A673 (cell line): ENCODE measurements at regions of chr20 and their contacts with region 1.

Region 1: GRCh38 chr20:49338061-49338460 is 60.2 kb upstream of the ZNFX1 start:
- DNase-seq: no peak
- H3K4me3 ChIP-seq: no peak overlapping the region
- H3K27ac ChIP-seq: no peak overlapping the region
- H3K4me1 ChIP-seq: no peaks in the 10 kb centered on the region
- H3K27me3 ChIP-seq: no peaks in the 10 kb centered on the region
- CTCF ChIP-seq: no peak

Region 2: DNA sequence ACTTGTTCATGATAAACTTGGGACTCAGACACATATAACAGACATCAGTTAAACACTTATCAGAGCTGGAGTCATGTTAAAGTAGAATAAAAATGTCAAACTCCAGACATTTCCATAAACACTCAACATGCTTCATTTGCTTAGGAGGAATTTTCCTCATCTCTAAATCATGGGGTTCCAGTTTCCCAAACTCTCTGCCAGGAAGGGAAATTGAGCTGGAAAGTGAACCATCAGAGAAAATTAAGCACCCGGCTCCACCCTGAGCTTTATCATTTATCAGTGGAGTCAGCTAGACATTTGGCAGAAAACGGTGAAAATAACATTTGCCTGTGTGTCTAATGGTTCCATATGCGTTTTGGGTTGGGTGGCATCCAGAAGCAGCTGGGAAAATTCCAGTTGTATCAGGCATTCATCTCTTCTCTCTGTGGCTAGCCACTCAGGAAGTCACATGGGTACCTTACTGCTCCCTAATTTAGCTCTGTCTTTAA is 35.0 kb before region 1 on chr20:
- CTCF ChIA-PET with region 1: no interaction called
- POLR2A ChIA-PET with region 1: no interaction called
- intact Hi-C with region 1: no loop called
- DNase-seq: no peak
- H3K4me3 ChIP-seq: no peak overlapping the region
- H3K27ac ChIP-seq: no peak overlapping the region
- H3K4me1 ChIP-seq: no peaks in the 10 kb centered on the region
- H3K27me3 ChIP-seq: no peaks in the 10 kb centered on the region
- CTCF ChIP-seq: no peak

Region 3: GRCh38 chr20:49484180-49485140 is 146.4 kb after region 1 on chr20:
- CTCF ChIA-PET with region 1: interaction called, 28 read pairs
- POLR2A ChIA-PET with region 1: no interaction called
- intact Hi-C with region 1: loop called (anchors 1 kb)
- DNase-seq: peak; percentile 86
- H3K4me3 ChIP-seq: peak overlapping the region; percentile 33
- H3K27ac ChIP-seq: no peak overlapping the region
- H3K4me1 ChIP-seq: no peaks in the 10 kb centered on the region
- H3K27me3 ChIP-seq: peaks cover 74% of the 10 kb centered on the region
- CTCF ChIP-seq: peak; percentile 85

Region 4: DNA sequence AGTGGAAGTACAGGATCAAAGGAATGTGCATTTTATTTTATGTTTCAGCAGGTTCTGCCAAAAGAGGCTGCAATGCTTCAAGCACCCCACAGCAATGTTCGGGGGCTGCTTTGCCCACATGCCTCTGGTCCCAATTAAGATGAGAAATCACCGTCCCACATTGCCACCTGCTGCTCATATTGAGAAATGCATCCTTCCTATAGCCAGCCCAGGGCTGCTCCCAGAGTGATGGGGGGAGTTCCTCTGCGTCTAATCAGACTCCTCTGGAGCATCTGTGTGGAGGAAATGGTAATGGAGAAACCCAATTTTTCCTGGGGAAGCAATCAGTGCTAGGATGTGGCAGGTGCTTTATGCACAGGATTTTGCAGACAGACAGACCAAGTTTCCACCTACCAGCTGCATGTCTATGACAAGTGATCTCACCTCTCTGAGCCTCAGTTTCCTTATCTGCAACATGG is 196.2 kb after region 1 on chr20:
- CTCF ChIA-PET with region 1: no interaction called
- POLR2A ChIA-PET with region 1: no interaction called
- intact Hi-C with region 1: loop called (anchors 1 kb)
- DNase-seq: peak; percentile 83
- H3K4me3 ChIP-seq: no peak overlapping the region
- H3K27ac ChIP-seq: no peak overlapping the region
- H3K4me1 ChIP-seq: no peaks in the 10 kb centered on the region
- H3K27me3 ChIP-seq: no peaks in the 10 kb centered on the region
- CTCF ChIP-seq: peak; percentile 80

Region 5: GRCh38 chr20:49865559-49865958 is 527.5 kb after region 1 on chr20:
- CTCF ChIA-PET with region 1: no interaction called
- POLR2A ChIA-PET with region 1: no interaction called
- intact Hi-C with region 1: no loop called
- DNase-seq: no peak
- H3K4me3 ChIP-seq: no peak overlapping the region
- H3K27ac ChIP-seq: no peak overlapping the region
- H3K4me1 ChIP-seq: no peaks in the 10 kb centered on the region
- H3K27me3 ChIP-seq: no peaks in the 10 kb centered on the region
- CTCF ChIP-seq: no peak